ENCODE measurements at regions of chr18 and their contacts with region 1.

Region 1: GRCh38 chr18:63974991-63975390 is 5.1 kb downstream of the SERPINB8 start:
- DNase-seq: no peak
- H3K4me3 ChIP-seq: peak overlapping the region in 1 of 7 experiments; percentile 9
- H3K27ac ChIP-seq: no peak overlapping the region
- H3K4me1 ChIP-seq: peaks cover 6 to 48% (median 32%) of the 10 kb centered on the region in 4 experiments
- H3K27me3 ChIP-seq: no peaks in the 10 kb centered on the region

Region 2: DNA sequence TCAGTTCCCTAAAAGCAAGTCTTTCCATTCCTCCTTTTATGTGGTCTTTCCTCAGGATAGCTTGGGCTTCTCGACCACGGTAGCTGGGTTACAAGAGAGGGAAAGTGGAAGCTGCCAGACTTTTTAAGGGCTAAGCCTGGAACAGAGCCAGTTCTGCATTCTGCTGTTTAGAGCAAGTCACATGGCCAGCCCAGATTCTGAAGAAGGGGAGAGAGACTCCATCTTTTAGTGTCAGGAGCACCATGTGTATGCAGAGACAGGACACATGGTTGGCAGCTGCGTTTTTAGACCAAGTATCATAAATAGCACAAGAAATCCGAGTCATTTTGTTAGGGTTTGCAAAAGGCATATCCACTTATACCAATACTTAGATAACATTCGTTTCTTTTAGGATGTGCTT is 21.2 kb before region 1 on chr18:
- CTCF ChIA-PET with region 1: interaction called, 11 read pairs
- POLR2A ChIA-PET with region 1: no interaction called
- DNase-seq: peak in 2 of 3 donors; percentile 21 to 22
- H3K4me3 ChIP-seq: no peak overlapping the region
- H3K27ac ChIP-seq: no peak overlapping the region
- H3K4me1 ChIP-seq: peaks cover 0 to 5% (median 2%) of the 10 kb centered on the region in 4 experiments
- H3K27me3 ChIP-seq: peaks cover 0 to 6% (median 0%) of the 10 kb centered on the region in 5 experiments

Region 3: DNA sequence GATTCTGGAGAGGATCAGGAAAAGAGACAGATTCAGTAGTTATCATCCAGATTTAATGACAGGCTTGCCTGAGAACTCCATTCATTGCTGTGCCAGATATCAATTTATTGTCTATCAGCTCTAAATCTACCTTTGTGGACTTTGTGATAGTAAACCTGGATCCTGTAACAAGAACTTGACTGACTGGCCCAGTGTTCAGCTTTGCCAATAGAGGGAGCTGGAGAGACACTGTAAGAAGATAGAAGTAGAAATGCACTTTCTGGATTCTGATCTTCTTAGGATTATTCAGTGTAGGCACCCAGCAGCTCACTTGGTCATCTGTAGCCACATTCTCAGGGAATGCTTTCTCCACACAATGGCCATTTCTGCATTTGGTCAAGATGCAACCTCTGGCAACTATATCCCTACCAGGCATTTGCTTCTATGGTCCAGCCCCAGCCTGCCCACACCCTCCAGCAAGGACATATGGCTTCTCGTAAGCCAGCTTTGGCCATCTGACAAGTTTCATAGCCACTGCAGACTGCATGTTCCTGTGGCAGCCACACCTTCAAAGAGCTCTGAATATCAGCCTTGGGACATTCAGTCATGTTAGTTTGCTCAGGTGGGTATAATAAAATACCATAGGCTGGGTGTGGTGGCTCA is 11.3 kb before region 1 on chr18:
- CTCF ChIA-PET with region 1: interaction called, 45 read pairs
- POLR2A ChIA-PET with region 1: no interaction called
- DNase-seq: peak; percentile 64 to 83 (median 76)
- H3K4me3 ChIP-seq: no peak overlapping the region
- H3K27ac ChIP-seq: no peak overlapping the region
- H3K4me1 ChIP-seq: no peaks in the 10 kb centered on the region
- H3K27me3 ChIP-seq: peaks cover 0 to 11% (median 0%) of the 10 kb centered on the region in 5 experiments

Region 4: DNA sequence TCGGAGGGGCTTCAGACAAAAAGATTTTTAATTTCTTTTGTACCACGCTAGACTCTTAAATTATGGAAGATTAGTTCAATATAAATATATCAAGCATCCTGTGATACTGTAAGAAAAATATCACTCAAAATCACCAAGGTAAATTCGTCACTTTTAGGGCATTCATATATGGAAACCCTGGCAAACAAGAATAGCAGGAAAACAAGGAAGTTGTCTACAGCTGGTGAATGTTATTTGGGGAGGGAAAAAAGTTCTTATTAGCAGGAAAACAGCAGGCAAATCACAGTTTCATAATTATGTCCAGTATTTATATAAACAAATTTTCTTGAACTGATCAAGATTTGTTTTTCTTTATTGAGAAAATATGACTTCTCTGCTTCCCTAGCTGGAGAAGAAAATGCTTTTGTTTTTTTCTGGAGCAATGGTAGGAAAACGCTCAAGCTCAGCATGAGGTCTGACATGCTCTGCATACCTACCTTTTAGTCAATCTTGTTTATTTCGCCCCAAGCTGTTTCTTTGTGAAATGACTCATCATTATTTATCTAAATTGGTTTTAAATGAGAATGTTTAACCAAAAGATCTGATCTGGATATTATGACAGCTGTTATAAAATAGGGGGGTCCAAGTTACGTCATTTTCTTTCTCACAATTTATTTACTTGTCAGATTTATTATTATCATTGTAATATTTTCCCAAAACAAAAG is 159.2 kb after region 1 on chr18:
- CTCF ChIA-PET with region 1: no interaction called
- POLR2A ChIA-PET with region 1: no interaction called
- DNase-seq: no peak
- H3K4me3 ChIP-seq: no peak overlapping the region
- H3K27ac ChIP-seq: no peak overlapping the region
- H3K4me1 ChIP-seq: no peaks in the 10 kb centered on the region
- H3K27me3 ChIP-seq: no peaks in the 10 kb centered on the region

Measured in common myeloid progenitor, CD34-positive (primary cell).